Left colon (tissue), 2 donors: ENCODE measurements at regions of chr7 and their contacts with region 1.

Region 1: GRCh38 chr7:8418629-8419245 is 14.7 kb upstream of the NXPH1 start:
- DNase-seq: peak in 1 of 2 donors; percentile 53
- ATAC-seq: no peak

Region 2: GRCh38 chr7:8490391-8491045 is 71.8 kb after region 1 on chr7:
- intact Hi-C with region 1: no loop called
- DNase-seq: no peak
- ATAC-seq: no peak

Region 3: DNA sequence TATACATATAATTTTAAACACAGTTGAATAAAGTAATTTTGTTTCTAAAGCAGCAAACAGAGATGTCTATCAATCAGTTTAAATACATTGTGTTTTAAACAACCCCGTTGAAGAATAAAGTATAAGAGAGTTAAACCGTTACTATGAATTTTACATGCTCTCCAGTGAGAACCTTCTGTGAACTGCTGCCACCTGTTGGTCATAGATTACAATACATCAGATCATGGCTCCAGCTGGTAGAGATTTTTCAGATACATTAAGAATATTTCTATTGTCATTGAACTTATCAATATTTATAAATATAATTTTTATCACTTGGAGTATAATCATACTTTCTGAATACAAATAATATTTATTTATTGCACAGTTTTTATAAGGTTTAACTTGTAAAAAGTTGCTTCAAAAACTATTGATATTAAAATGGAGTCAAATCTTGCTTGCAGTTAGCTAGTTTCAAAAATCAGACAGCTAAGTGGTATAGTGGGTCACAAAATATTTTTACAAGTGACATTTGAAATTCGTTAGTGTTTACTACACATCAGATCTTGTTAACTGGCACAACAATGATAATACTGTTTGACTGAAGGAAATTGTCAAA is 1993.8 kb after region 1 on chr7:
- intact Hi-C with region 1: loop called in 1 of 2 experiments (anchors 10 kb)
- DNase-seq: peak in 1 of 2 donors; percentile 4
- ATAC-seq: no peak